ENCODE measurements at regions of chr11 and their contacts with region 1.

Region 1: GRCh38 chr11:124837491-124837856 is 27.8 kb upstream of the ROBO3 start:
- DNase-seq: peak in 17 of 42 donors; percentile 16 to 68 (median 39)

Region 2: GRCh38 chr11:124673333-124674167 is 163.9 kb before region 1 on chr11 and contains the starts of genes SIAE and SPA17:
- intact Hi-C with region 1: loop called (anchors 5 kb)
- DNase-seq: peak; percentile 78 to 96 (median 91)

Region 3: GRCh38 chr11:124724979-124725718 is 112.3 kb before region 1 on chr11:
- intact Hi-C with region 1: no loop called
- DNase-seq: peak in 39 of 42 donors; percentile 36 to 89 (median 71)

Region 4: GRCh38 chr11:124763156-124763947 is 74.1 kb before region 1 on chr11:
- intact Hi-C with region 1: loop called (anchors 5 kb)
- DNase-seq: peak; percentile 72 to 93 (median 86)